Heart left ventricle (tissue), 16 donors: ENCODE measurements at regions of chr1 and their contacts with region 1.

Region 1: GRCh38 chr1:3069491-3070303 is 694 bp downstream of the PRDM16 start:
- DNase-seq: peak in 4 of 5 donors; percentile 59 to 69 (median 63)
- ATAC-seq: peak in 3 of 4 donors; percentile 30 to 42 (median 34)
- H3K4me3 ChIP-seq: peak overlapping the region; percentile 70 to 98 (median 87)
- H3K27ac ChIP-seq: peak overlapping the region; percentile 78 to 99 (median 90)
- H3K4me1 ChIP-seq: peaks cover 0 to 84% (median 19%) of the 10 kb centered on the region in 12 donors
- H3K27me3 ChIP-seq: peaks cover 8 to 90% (median 38%) of the 10 kb centered on the region in 9 donors
- CTCF ChIP-seq: peak in 11 of 12 donors; percentile 14 to 67 (median 47)
- POLR2A ChIP-seq: no peak

Region 2: GRCh38 chr1:2504225-2504948 is 565.3 kb before region 1 on chr1:
- intact Hi-C with region 1: no loop called
- DNase-seq: no peak
- ATAC-seq: peak in 1 of 4 donors; percentile 4
- H3K4me3 ChIP-seq: no peak overlapping the region
- H3K27ac ChIP-seq: no peak overlapping the region
- H3K4me1 ChIP-seq: peaks cover 0 to 23% (median 6%) of the 10 kb centered on the region in 12 donors
- H3K27me3 ChIP-seq: peaks cover 4 to 53% (median 19%) of the 10 kb centered on the region in 9 donors
- CTCF ChIP-seq: no peak
- POLR2A ChIP-seq: no peak

Region 3: DNA sequence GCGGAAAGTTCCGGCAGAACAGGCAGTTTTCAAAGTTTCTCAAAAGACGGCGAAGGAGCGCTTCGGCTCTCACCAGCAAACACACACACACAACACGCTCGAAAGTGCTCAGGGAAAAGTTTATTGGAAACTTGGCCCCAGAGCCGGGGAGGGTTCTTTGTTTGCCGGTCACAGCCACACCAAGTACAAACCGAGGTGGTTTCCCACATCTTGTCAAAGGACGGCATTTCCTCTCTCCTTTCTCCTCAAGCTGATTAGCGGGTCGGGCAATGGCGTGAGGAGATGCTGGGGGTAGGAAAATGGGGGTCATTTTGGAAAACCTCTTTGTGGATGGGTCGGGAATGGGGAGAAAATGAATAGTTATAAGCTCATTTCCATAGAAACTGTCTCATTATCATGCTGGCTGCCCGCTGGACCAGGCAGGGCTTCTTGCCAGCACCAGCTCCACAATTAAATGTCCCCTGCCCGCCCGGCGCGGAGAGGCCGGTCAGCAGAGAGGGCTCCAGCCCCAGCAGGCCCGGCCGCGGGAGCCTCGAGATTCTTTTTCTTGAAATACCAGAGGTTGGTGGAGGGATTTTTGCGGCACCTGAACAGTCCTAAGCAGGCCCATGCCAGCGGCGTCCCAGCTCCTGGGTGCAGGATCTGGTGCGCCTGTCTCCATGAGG is 91.6 kb after region 1 on chr1:
- intact Hi-C with region 1: loop called in 1 of 10 experiments (anchors 10 kb)
- DNase-seq: no peak
- ATAC-seq: peak; percentile 44 to 58 (median 50)
- H3K4me3 ChIP-seq: no peak overlapping the region
- H3K27ac ChIP-seq: peak overlapping the region in 2 of 12 donors; percentile 22 to 31
- H3K4me1 ChIP-seq: peaks cover 0 to 42% (median 8%) of the 10 kb centered on the region in 12 donors
- H3K27me3 ChIP-seq: peaks cover 0 to 14% (median 0%) of the 10 kb centered on the region in 9 donors
- CTCF ChIP-seq: no peak
- POLR2A ChIP-seq: no peak

Region 4: GRCh38 chr1:3186513-3186921 is 116.8 kb after region 1 on chr1:
- intact Hi-C with region 1: loop called in 2 of 10 experiments (anchors 5 kb)
- DNase-seq: peak in 4 of 5 donors; percentile 84 to 92 (median 89)
- ATAC-seq: peak; percentile 61 to 90 (median 76)
- H3K4me3 ChIP-seq: peak overlapping the region in 1 of 12 donors; percentile 10
- H3K27ac ChIP-seq: peak overlapping the region; percentile 12 to 92 (median 76)
- H3K4me1 ChIP-seq: peaks cover 0 to 43% (median 25%) of the 10 kb centered on the region in 12 donors
- H3K27me3 ChIP-seq: peaks cover 0 to 20% (median 0%) of the 10 kb centered on the region in 9 donors
- CTCF ChIP-seq: no peak
- POLR2A ChIP-seq: no peak

Region 5: GRCh38 chr1:3319874-3320245 is 250.2 kb after region 1 on chr1:
- intact Hi-C with region 1: loop called in 1 of 10 experiments (anchors 10 kb)
- DNase-seq: peak in 1 of 5 donors; percentile 25
- ATAC-seq: peak in 3 of 4 donors; percentile 25 to 35 (median 33)
- H3K4me3 ChIP-seq: no peak overlapping the region
- H3K27ac ChIP-seq: no peak overlapping the region
- H3K4me1 ChIP-seq: peaks cover 4 to 56% (median 26%) of the 10 kb centered on the region in 12 donors
- H3K27me3 ChIP-seq: peaks cover 0 to 8% (median 0%) of the 10 kb centered on the region in 9 donors
- CTCF ChIP-seq: peak; percentile 51 to 74 (median 68)
- POLR2A ChIP-seq: no peak

Region 6: GRCh38 chr1:3393024-3393986 is 323.6 kb after region 1 on chr1:
- intact Hi-C with region 1: loop called in 1 of 10 experiments (anchors 10 kb)
- DNase-seq: peak; percentile 72 to 89 (median 76)
- ATAC-seq: peak; percentile 81 to 91 (median 84)
- H3K4me3 ChIP-seq: peak overlapping the region; percentile 23 to 62 (median 50)
- H3K27ac ChIP-seq: peak overlapping the region; percentile 44 to 90 (median 76)
- H3K4me1 ChIP-seq: peaks cover 0 to 32% (median 13%) of the 10 kb centered on the region in 12 donors
- H3K27me3 ChIP-seq: peaks cover 0 to 34% (median 4%) of the 10 kb centered on the region in 9 donors
- CTCF ChIP-seq: peak in 3 of 12 donors; percentile 13 to 24 (median 20)
- POLR2A ChIP-seq: peak in 1 of 2 donors; percentile 39

Region 7: GRCh38 chr1:3423245-3423829 is 353.6 kb after region 1 on chr1:
- intact Hi-C with region 1: loop called in 7 of 10 experiments (anchors 1 to 5 kb)
- DNase-seq: peak; percentile 86 to 95 (median 90)
- ATAC-seq: peak; percentile 91 to 96 (median 92)
- H3K4me3 ChIP-seq: peak overlapping the region in 1 of 12 donors; percentile 44
- H3K27ac ChIP-seq: peak overlapping the region; percentile 39 to 95 (median 83)
- H3K4me1 ChIP-seq: peaks cover 11 to 41% (median 31%) of the 10 kb centered on the region in 12 donors
- H3K27me3 ChIP-seq: no peaks in the 10 kb centered on the region
- CTCF ChIP-seq: no peak
- POLR2A ChIP-seq: peak in 1 of 2 donors; percentile 22